ENCODE measurements at regions of chr1 and their contacts with region 1.

Region 1: DNA sequence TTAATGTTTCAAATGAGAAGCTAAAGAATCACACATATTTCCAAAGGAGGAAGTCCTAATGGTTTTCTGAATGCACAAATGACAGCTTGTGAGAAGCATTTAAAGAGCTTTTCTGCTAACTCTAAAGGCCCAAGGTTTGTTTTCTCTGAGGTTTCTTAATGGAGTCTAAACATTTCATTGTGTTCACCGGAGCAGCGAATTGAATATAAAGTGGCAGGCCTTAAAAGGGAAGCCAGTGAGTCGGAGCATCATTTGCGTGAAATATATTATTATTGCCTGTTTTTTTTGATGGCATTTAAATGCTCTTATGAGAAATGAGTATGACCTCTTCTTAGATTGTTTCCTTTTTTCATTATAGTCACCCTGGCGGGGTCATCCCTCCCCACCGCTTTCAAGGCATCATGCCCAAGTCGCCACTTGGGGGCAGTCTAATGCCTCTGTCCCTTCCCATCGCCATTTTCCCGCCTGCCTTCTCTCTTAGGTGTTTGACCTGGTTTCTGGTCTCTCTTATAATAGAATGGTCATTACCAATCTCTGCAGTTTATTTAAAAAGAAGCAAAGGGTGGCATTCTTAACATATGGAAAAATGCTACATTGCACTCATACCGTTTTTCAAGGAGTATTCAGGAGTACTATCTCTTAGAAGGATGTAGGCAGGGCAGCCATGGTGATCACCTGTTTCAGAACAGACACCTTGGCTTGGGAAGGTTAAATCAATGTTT is 25.3 kb upstream of the OVAAL start:
- DNase-seq: peak; percentile 67 to 86 (median 79)
- ATAC-seq: peak; percentile 65 to 71
- H3K4me3 ChIP-seq: no peak overlapping the region
- H3K27ac ChIP-seq: no peak overlapping the region
- H3K4me1 ChIP-seq: no peaks in the 10 kb centered on the region
- H3K27me3 ChIP-seq: no peaks in the 10 kb centered on the region

Region 2: GRCh38 chr1:180462102-180462501 is 71.3 kb before region 1 on chr1:
- intact Hi-C with region 1: no loop called
- DNase-seq: no peak
- ATAC-seq: no peak
- H3K4me3 ChIP-seq: no peak overlapping the region
- H3K27ac ChIP-seq: no peak overlapping the region
- H3K4me1 ChIP-seq: no peaks in the 10 kb centered on the region
- H3K27me3 ChIP-seq: no peaks in the 10 kb centered on the region

Region 3: GRCh38 chr1:180586671-180587155 is 53.3 kb after region 1 on chr1:
- intact Hi-C with region 1: no loop called
- DNase-seq: no peak
- ATAC-seq: no peak
- H3K4me3 ChIP-seq: no peak overlapping the region
- H3K27ac ChIP-seq: no peak overlapping the region
- H3K4me1 ChIP-seq: no peaks in the 10 kb centered on the region
- H3K27me3 ChIP-seq: no peaks in the 10 kb centered on the region

Region 4: GRCh38 chr1:180631766-180632325 is 98.4 kb after region 1 on chr1 and contains the start of gene XPR1:
- intact Hi-C with region 1: loop called in 3 of 4 experiments (anchors 10 kb)
- DNase-seq: peak; percentile 97 to 99 (median 98)
- ATAC-seq: peak; percentile 100
- H3K4me3 ChIP-seq: peak within 1 kb of the TSS; percentile 87
- H3K27ac ChIP-seq: peak within 1 kb of the TSS; percentile 75
- H3K4me1 ChIP-seq: peaks cover 3% of the 10 kb centered on the region
- H3K27me3 ChIP-seq: no peaks in the 10 kb centered on the region
- total RNA-seq, gene XPR1: 22.9 to 33.4 (median 31.5) TPM